CD8-positive, alpha-beta T cell (primary cell): ENCODE measurements at regions of chr6 and their contacts with region 1.

Region 1: GRCh38 chr6:151390276-151391032 is 905 bp downstream of the ZBTB2 start:
- DNase-seq: peak; percentile 92 to 100 (median 98)
- ATAC-seq: peak; percentile 76
- H3K4me3 ChIP-seq: peak overlapping the region; percentile 66 to 92
- H3K4me3 Mint-ChIP-seq: peak overlapping the region; percentile 98
- H3K27ac ChIP-seq: peak overlapping the region; percentile 89 to 94
- H3K27ac Mint-ChIP-seq: peak overlapping the region; percentile 99
- H3K4me1 ChIP-seq: peaks cover 56% of the 10 kb centered on the region
- H3K4me1 Mint-ChIP-seq: peaks cover 66% of the 10 kb centered on the region
- H3K27me3 ChIP-seq: no peaks in the 10 kb centered on the region
- H3K27me3 Mint-ChIP-seq: no peaks in the 10 kb centered on the region
- CTCF ChIP-seq: no peak

Region 2: GRCh38 chr6:150865406-150866146 is 524.9 kb before region 1 on chr6 and contains the start of gene MTHFD1L:
- CTCF ChIA-PET with region 1: no interaction called
- POLR2A ChIA-PET with region 1: no interaction called
- intact Hi-C with region 1: loop called in 1 of 2 experiments (anchors 5 kb)
- DNase-seq: peak; percentile 24 to 82 (median 64)
- ATAC-seq: peak; percentile 71
- H3K4me3 ChIP-seq: peak within 1 kb of the TSS; percentile 53 to 61
- H3K4me3 Mint-ChIP-seq: peak within 1 kb of the TSS; percentile 85
- H3K27ac ChIP-seq: peak within 1 kb of the TSS in 1 of 2 experiments; percentile 48
- H3K27ac Mint-ChIP-seq: peak within 1 kb of the TSS; percentile 77
- H3K4me1 ChIP-seq: peaks cover 12% of the 10 kb centered on the region
- H3K4me1 Mint-ChIP-seq: peaks cover 9% of the 10 kb centered on the region
- H3K27me3 ChIP-seq: no peaks in the 10 kb centered on the region
- H3K27me3 Mint-ChIP-seq: peaks cover 17% of the 10 kb centered on the region
- CTCF ChIP-seq: peak; percentile 26
- total RNA-seq, gene MTHFD1L: 7.8 to 9.6 TPM

Region 3: GRCh38 chr6:151379933-151380847 is 10.3 kb before region 1 on chr6:
- CTCF ChIA-PET with region 1: interaction called, 4 read pairs
- POLR2A ChIA-PET with region 1: interaction called, 44 read pairs
- intact Hi-C with region 1: loop called (anchors 1 kb)
- DNase-seq: peak in 2 of 9 experiments; percentile 49 to 73
- ATAC-seq: peak; percentile 82
- H3K4me3 ChIP-seq: peak overlapping the region; percentile 43 to 49
- H3K4me3 Mint-ChIP-seq: peak overlapping the region; percentile 79
- H3K27ac ChIP-seq: peak overlapping the region; percentile 68 to 93
- H3K27ac Mint-ChIP-seq: peak overlapping the region; percentile 92
- H3K4me1 ChIP-seq: peaks cover 57% of the 10 kb centered on the region
- H3K4me1 Mint-ChIP-seq: peaks cover 72% of the 10 kb centered on the region
- H3K27me3 ChIP-seq: no peaks in the 10 kb centered on the region
- H3K27me3 Mint-ChIP-seq: no peaks in the 10 kb centered on the region
- CTCF ChIP-seq: no peak

Region 4: DNA sequence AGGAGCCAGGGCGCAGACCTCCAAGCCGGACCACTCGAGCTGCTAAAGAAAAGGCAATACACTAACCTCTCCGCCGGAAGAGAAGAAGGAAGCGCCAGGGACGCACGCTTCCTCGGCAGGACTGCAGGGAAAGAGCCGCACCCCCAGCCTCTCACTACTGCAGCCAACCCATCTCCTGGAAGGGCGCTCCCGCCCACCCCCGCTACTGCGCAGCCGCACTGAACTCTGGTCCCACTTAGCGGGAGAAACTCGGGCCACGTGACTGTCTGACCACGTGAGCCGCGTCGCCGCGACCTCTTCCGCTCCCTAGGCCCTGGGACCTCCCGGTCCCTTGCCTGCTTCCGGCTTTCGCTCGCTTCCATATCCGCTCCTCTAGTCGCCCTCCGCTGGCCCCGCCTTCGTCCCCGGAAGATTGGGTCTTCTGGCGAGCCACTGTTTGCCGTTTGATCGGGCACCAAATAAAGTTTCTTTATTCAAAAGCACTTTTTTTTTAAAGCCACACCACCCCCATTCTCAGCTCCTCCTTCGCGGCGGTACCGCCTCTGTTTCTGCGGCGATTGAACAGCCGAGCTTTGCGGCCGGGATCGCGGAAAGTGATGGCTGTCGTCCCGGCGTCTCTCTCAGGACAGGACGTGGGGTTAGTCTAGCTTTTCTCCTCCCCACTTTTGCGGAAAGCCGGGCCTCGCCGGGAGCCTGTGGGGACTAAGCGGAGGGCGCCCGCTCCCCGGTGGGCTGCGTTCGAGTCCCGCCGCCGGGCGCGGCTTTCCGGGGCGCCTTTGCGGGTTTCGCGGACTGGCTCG is 61.7 kb after region 1 on chr6 and contains the start of gene RMND1:
- CTCF ChIA-PET with region 1: interaction called, 4 read pairs
- POLR2A ChIA-PET with region 1: interaction called, 58 read pairs
- intact Hi-C with region 1: loop called (anchors 1 kb)
- DNase-seq: peak; percentile 98 to 100 (median 99)
- ATAC-seq: peak; percentile 95
- H3K4me3 ChIP-seq: peak within 1 kb of the TSS; percentile 74 to 81
- H3K4me3 Mint-ChIP-seq: peak within 1 kb of the TSS; percentile 92
- H3K27ac ChIP-seq: peak within 1 kb of the TSS; percentile 75 to 78
- H3K27ac Mint-ChIP-seq: peak within 1 kb of the TSS; percentile 92
- H3K4me1 ChIP-seq: peaks cover 24% of the 10 kb centered on the region
- H3K4me1 Mint-ChIP-seq: peaks cover 48% of the 10 kb centered on the region
- H3K27me3 ChIP-seq: no peaks in the 10 kb centered on the region
- H3K27me3 Mint-ChIP-seq: no peaks in the 10 kb centered on the region
- CTCF ChIP-seq: no peak
- total RNA-seq, gene RMND1: 5.8 to 6.3 TPM

Region 5: GRCh38 chr6:152184917-152185574 is 794.6 kb after region 1 on chr6:
- CTCF ChIA-PET with region 1: no interaction called
- POLR2A ChIA-PET with region 1: interaction called, 13 read pairs
- intact Hi-C with region 1: loop called in 1 of 2 experiments (anchors 5 kb)
- DNase-seq: peak in 4 of 9 experiments; percentile 16 to 69 (median 41)
- ATAC-seq: peak; percentile 71
- H3K4me3 ChIP-seq: peak overlapping the region; percentile 47 to 51
- H3K4me3 Mint-ChIP-seq: peak overlapping the region; percentile 91
- H3K27ac ChIP-seq: peak overlapping the region; percentile 80 to 92
- H3K27ac Mint-ChIP-seq: peak overlapping the region; percentile 99
- H3K4me1 ChIP-seq: peaks cover 48% of the 10 kb centered on the region
- H3K4me1 Mint-ChIP-seq: peaks cover 74% of the 10 kb centered on the region
- H3K27me3 ChIP-seq: no peaks in the 10 kb centered on the region
- H3K27me3 Mint-ChIP-seq: no peaks in the 10 kb centered on the region
- CTCF ChIP-seq: no peak

Region 6: GRCh38 chr6:152982768-152983636 is 1592.5 kb after region 1 on chr6 and contains the start of gene FBXO5:
- CTCF ChIA-PET with region 1: no interaction called
- POLR2A ChIA-PET with region 1: interaction called, 3 read pairs
- intact Hi-C with region 1: loop called (anchors 2 to 5 kb)
- DNase-seq: peak; percentile 94 to 99 (median 97)
- ATAC-seq: peak; percentile 93
- H3K4me3 ChIP-seq: peak within 1 kb of the TSS; percentile 70 to 85
- H3K4me3 Mint-ChIP-seq: peak within 1 kb of the TSS; percentile 99
- H3K27ac ChIP-seq: peak within 1 kb of the TSS; percentile 73 to 94
- H3K27ac Mint-ChIP-seq: peak within 1 kb of the TSS; percentile 97
- H3K4me1 ChIP-seq: peaks cover 18% of the 10 kb centered on the region
- H3K4me1 Mint-ChIP-seq: peaks cover 48% of the 10 kb centered on the region
- H3K27me3 ChIP-seq: no peaks in the 10 kb centered on the region
- H3K27me3 Mint-ChIP-seq: no peaks in the 10 kb centered on the region
- CTCF ChIP-seq: no peak
- total RNA-seq, gene FBXO5: 3.0 to 3.9 TPM